ENCODE measurements at regions of chr1 and their contacts with region 1.

Region 1: DNA sequence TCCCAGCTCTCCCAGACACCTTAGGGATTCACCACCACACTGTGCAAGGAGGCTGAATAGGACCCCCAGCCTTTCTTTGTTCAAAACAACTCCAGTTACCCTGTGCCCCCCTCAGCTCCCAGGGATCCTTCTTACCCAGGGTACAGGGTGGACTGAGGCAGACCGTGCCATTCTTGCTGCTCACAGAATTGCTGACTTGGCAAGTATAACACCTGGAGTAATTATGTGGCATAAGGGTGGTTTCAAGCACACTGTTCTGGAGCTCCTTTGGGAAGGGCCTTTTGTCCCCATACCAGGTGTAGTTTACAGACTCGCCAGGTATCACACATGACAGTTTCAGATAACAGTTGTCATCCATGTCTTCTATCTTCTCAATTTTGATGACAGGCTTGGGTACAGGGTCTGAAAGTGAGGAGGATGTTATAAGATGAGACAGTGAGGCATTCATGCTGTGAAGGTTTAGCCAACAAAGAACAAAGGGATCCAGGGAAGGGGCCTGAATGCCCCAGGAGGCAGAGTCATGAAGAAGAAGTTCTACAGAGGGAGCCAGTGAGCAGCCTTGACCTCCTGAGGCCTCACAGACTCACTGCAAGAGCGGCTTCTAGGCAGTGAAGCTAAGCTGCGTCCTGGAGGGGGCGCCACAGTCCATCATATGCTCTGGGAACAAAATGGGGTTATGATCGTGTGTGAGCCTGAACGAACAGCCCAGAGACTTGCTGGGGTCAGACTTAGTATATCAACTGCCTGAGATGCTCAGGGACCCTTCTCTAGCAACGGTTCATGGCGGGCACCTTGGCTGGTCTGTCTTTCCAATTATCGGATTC is 30.3 kb downstream of the CD48 start:
- DNase-seq: peak; percentile 83 to 95
- ATAC-seq: peak; percentile 79 to 92 (median 80)
- H3K4me3 ChIP-seq: no peak overlapping the region
- H3K4me3 Mint-ChIP-seq: peak overlapping the region; percentile 65
- H3K27ac ChIP-seq: peak overlapping the region; percentile 26
- H3K27ac Mint-ChIP-seq: peak overlapping the region; percentile 94 to 96
- H3K4me1 ChIP-seq: peaks cover 53% of the 10 kb centered on the region
- H3K4me1 Mint-ChIP-seq: peaks cover 61 to 71% of the 10 kb centered on the region in 2 donors
- H3K27me3 ChIP-seq: no peaks in the 10 kb centered on the region
- H3K27me3 Mint-ChIP-seq: no peaks in the 10 kb centered on the region
- CTCF ChIP-seq: peak; percentile 87

Region 2: GRCh38 chr1:160726498-160727315 is 45.4 kb after region 1 on chr1:
- intact Hi-C with region 1: loop called (anchors 1 kb)
- DNase-seq: peak in 1 of 2 donors; percentile 90
- ATAC-seq: peak; percentile 88 to 94 (median 90)
- H3K4me3 ChIP-seq: no peak overlapping the region
- H3K4me3 Mint-ChIP-seq: no peak overlapping the region
- H3K27ac ChIP-seq: no peak overlapping the region
- H3K27ac Mint-ChIP-seq: no peak overlapping the region
- H3K4me1 ChIP-seq: peaks cover 14% of the 10 kb centered on the region
- H3K4me1 Mint-ChIP-seq: peaks cover 19 to 20% of the 10 kb centered on the region in 2 donors
- H3K27me3 ChIP-seq: no peaks in the 10 kb centered on the region
- H3K27me3 Mint-ChIP-seq: no peaks in the 10 kb centered on the region
- CTCF ChIP-seq: peak; percentile 91

Region 3: GRCh38 chr1:160795951-160796383 is 114.7 kb after region 1 on chr1 and contains the start of gene LY9:
- intact Hi-C with region 1: loop called (anchors 1 kb)
- DNase-seq: peak; percentile 66 to 96
- ATAC-seq: peak; percentile 84 to 93 (median 92)
- H3K4me3 ChIP-seq: peak within 1 kb of the TSS; percentile 39
- H3K4me3 Mint-ChIP-seq: peak within 1 kb of the TSS; percentile 90
- H3K27ac ChIP-seq: peak within 1 kb of the TSS; percentile 94
- H3K27ac Mint-ChIP-seq: peak within 1 kb of the TSS; percentile 91 to 95
- H3K4me1 ChIP-seq: peaks cover 49% of the 10 kb centered on the region
- H3K4me1 Mint-ChIP-seq: peaks cover 59 to 70% of the 10 kb centered on the region in 2 donors
- H3K27me3 ChIP-seq: no peaks in the 10 kb centered on the region
- H3K27me3 Mint-ChIP-seq: no peaks in the 10 kb centered on the region
- CTCF ChIP-seq: no peak
- total RNA-seq, gene LY9: 30.3 to 47.1 (median 34.4) TPM

Region 4: GRCh38 chr1:160877221-160877620 is 195.9 kb after region 1 on chr1:
- intact Hi-C with region 1: loop called (anchors 5 kb)
- DNase-seq: peak in 1 of 2 donors; percentile 75
- ATAC-seq: peak; percentile 82 to 97 (median 91)
- H3K4me3 ChIP-seq: no peak overlapping the region
- H3K4me3 Mint-ChIP-seq: no peak overlapping the region
- H3K27ac ChIP-seq: no peak overlapping the region
- H3K27ac Mint-ChIP-seq: peak overlapping the region in 1 of 2 donors; percentile 14
- H3K4me1 ChIP-seq: peaks cover 16% of the 10 kb centered on the region
- H3K4me1 Mint-ChIP-seq: peaks cover 16 to 17% of the 10 kb centered on the region in 2 donors
- H3K27me3 ChIP-seq: no peaks in the 10 kb centered on the region
- H3K27me3 Mint-ChIP-seq: no peaks in the 10 kb centered on the region
- CTCF ChIP-seq: peak; percentile 73

Measured in natural killer cell (primary cell).